ENCODE measurements at regions of chr4 and their contacts with region 1.

Region 1: GRCh38 chr4:105895583-105896460 is 551 bp downstream of the NPNT start:
- DNase-seq: peak in 1 of 2 donors; percentile 74
- H3K4me3 ChIP-seq: peak overlapping the region; percentile 81 to 83
- H3K27ac ChIP-seq: peak overlapping the region; percentile 88 to 94
- H3K4me1 ChIP-seq: peaks cover 0 to 6% of the 10 kb centered on the region in 2 donors
- H3K27me3 ChIP-seq: no peaks in the 10 kb centered on the region
- CTCF ChIP-seq: peak in 2 of 3 experiments; percentile 20 to 34

Region 2: GRCh38 chr4:105708530-105709391 is 187.1 kb before region 1 on chr4 and contains the starts of genes GSTCD and INTS12:
- intact Hi-C with region 1: loop called (anchors 5 kb)
- DNase-seq: peak; percentile 61 to 95
- H3K4me3 ChIP-seq: peak within 1 kb of the TSS; percentile 76 to 87
- H3K27ac ChIP-seq: peak within 1 kb of the TSS; percentile 84 to 90
- H3K4me1 ChIP-seq: peaks cover 7 to 18% of the 10 kb centered on the region in 2 donors
- H3K27me3 ChIP-seq: no peaks in the 10 kb centered on the region
- CTCF ChIP-seq: no peak
- total RNA-seq, gene GSTCD: 4.4 TPM
- total RNA-seq, gene INTS12: 11.5 TPM

Region 3: DNA sequence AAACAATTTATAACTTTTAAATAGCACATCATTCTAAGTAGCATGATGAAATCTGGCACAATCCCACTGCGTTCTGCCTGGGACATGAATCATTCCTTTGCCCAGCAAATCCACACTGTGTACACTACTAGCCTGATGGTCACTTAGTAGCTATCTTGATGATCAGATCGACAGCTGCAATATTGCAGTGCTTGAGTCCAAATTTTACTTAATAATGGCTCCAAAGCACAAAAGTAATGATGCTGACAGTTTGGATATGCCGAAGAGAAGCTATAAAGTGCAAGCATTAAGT is 87.1 kb before region 1 on chr4:
- intact Hi-C with region 1: loop called (anchors 5 kb)
- DNase-seq: peak in 1 of 2 donors; percentile 73
- H3K4me3 ChIP-seq: peak overlapping the region; percentile 44 to 49
- H3K27ac ChIP-seq: peak overlapping the region; percentile 56 to 65
- H3K4me1 ChIP-seq: peaks cover 0 to 6% of the 10 kb centered on the region in 2 donors
- H3K27me3 ChIP-seq: no peaks in the 10 kb centered on the region
- CTCF ChIP-seq: no peak

Region 4: GRCh38 chr4:105840426-105841174 is 55.2 kb before region 1 on chr4:
- intact Hi-C with region 1: loop called (anchors 5 kb)
- DNase-seq: no peak
- H3K4me3 ChIP-seq: no peak overlapping the region
- H3K27ac ChIP-seq: no peak overlapping the region
- H3K4me1 ChIP-seq: peaks cover 0 to 11% of the 10 kb centered on the region in 2 donors
- H3K27me3 ChIP-seq: no peaks in the 10 kb centered on the region
- CTCF ChIP-seq: no peak

Region 5: GRCh38 chr4:105978684-105979296 is 83.0 kb after region 1 on chr4:
- intact Hi-C with region 1: loop called (anchors 5 kb)
- DNase-seq: peak; percentile 25 to 88
- H3K4me3 ChIP-seq: no peak overlapping the region
- H3K27ac ChIP-seq: peak overlapping the region; percentile 84 to 89
- H3K4me1 ChIP-seq: peaks cover 3 to 7% of the 10 kb centered on the region in 2 donors
- H3K27me3 ChIP-seq: no peaks in the 10 kb centered on the region
- CTCF ChIP-seq: no peak

Region 6: GRCh38 chr4:106032851-106033286 is 137.0 kb after region 1 on chr4:
- intact Hi-C with region 1: loop called (anchors 5 kb)
- DNase-seq: peak; percentile 36 to 88
- H3K4me3 ChIP-seq: no peak overlapping the region
- H3K27ac ChIP-seq: peak overlapping the region; percentile 69 to 70
- H3K4me1 ChIP-seq: peaks cover 0 to 17% of the 10 kb centered on the region in 2 donors
- H3K27me3 ChIP-seq: no peaks in the 10 kb centered on the region
- CTCF ChIP-seq: no peak

Region 7: DNA sequence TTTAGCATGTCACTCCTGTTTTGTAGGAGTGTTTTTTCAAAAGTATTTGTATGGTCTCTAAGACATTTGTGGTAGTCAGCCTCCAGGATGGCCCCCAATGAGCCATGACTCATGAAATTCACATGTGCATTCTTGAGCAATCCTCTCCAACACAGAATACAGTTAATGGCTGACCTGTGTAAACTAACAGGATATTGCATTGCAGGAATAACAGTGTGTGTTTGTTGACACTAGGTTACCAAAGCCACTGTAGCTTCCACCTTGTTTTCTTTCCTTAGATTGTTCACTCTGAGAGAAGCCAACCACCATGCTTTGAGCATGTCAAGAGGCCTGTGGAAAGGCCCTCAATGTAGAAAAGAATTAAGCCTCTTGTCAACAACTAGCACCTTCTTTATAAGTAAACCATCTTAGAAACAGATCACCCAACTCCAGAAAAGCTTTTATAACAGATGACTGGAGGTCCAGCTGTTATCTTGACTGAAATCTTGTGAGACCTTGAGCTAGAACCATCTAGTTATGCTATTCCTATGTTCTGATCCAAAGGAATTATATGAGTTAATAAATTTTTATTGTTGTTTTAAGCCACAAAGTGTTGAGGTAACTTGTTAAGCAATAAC is 391.6 kb after region 1 on chr4:
- intact Hi-C with region 1: no loop called
- DNase-seq: no peak
- H3K4me3 ChIP-seq: no peak overlapping the region
- H3K27ac ChIP-seq: no peak overlapping the region
- H3K4me1 ChIP-seq: no peaks in the 10 kb centered on the region
- H3K27me3 ChIP-seq: no peaks in the 10 kb centered on the region
- CTCF ChIP-seq: no peak